PC-9 (cell line): ENCODE measurements at regions of chr1 and their contacts with region 1.

Region 1: GRCh38 chr1:54944610-54945544 is 35.6 kb upstream of the TMEM61 start:
- DNase-seq: peak; percentile 72 to 79
- H3K4me3 ChIP-seq: peak overlapping the region; percentile 10; the same call in 1 of the 2 replicates
- H3K27ac ChIP-seq: 0 out of 2 replicates have a peak overlapping the region, but pooled peaks have one; percentile 21
- H3K4me1 ChIP-seq: peaks cover 14% of the 10 kb centered on the region
- H3K27me3 ChIP-seq: no peaks in the 10 kb centered on the region
- CTCF ChIP-seq: peak; percentile 90

Region 2: DNA sequence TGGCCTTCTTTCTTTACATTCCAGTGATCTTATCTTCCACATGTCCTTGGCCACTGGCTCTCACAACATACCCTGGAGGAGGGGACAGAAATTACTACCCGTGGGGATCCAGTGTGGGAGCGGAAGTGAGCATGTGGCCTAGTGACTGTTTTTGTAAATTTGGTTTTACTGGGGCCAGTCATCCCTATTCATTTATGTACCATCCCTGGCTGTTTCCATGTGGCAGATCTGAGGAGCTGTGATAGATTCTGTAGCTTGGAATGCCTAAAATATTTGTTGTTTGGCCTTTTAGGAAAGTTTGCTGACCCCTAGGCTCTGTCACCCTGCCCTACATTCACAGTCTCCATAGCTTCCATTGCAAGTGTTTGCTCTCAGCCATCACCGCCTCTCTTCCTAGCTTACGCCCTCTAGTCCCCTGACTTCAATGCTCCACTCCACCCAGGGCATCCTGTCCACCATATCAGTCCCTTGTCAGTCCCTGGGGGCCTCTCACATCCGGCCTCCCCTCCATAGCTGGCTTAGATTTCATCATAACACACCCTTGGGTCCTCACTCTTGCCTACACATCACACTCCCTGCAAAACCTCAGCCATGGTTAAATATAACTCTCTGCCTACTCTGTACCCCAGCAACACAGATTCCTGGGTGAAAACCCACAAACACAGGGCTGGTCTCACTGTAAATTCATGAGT is 83.7 kb before region 1 on chr1:
- CTCF ChIA-PET with region 1: no interaction called
- POLR2A ChIA-PET with region 1: no interaction called
- intact Hi-C with region 1: loop called (anchors 2 kb)
- DNase-seq: peak; percentile 79 to 89
- H3K4me3 ChIP-seq: no peak overlapping the region
- H3K27ac ChIP-seq: peak overlapping the region; percentile 88
- H3K4me1 ChIP-seq: peaks cover 90% of the 10 kb centered on the region
- H3K27me3 ChIP-seq: no peaks in the 10 kb centered on the region
- CTCF ChIP-seq: no peak

Region 3: GRCh38 chr1:54973205-54973921 is 28.5 kb after region 1 on chr1:
- CTCF ChIA-PET with region 1: interaction called, 17 read pairs
- POLR2A ChIA-PET with region 1: no interaction called
- intact Hi-C with region 1: loop called (anchors 2 kb)
- DNase-seq: no peak
- H3K4me3 ChIP-seq: no peak overlapping the region
- H3K27ac ChIP-seq: no peak overlapping the region
- H3K4me1 ChIP-seq: peaks cover 72% of the 10 kb centered on the region
- H3K27me3 ChIP-seq: no peaks in the 10 kb centered on the region
- CTCF ChIP-seq: peak; percentile 56; the same call in 1 of the 2 replicates

Region 4: GRCh38 chr1:54996359-54996868 is 51.5 kb after region 1 on chr1:
- CTCF ChIA-PET with region 1: interaction called, 13 read pairs
- POLR2A ChIA-PET with region 1: no interaction called
- intact Hi-C with region 1: loop called (anchors 1 kb)
- DNase-seq: peak; percentile 39 to 81
- H3K4me3 ChIP-seq: peak overlapping the region; percentile 41; the same call in 1 of the 2 replicates
- H3K27ac ChIP-seq: no peak overlapping the region
- H3K4me1 ChIP-seq: 0 out of 2 replicates have a peak, but pooled peaks cover 4% of the 10 kb centered on the region
- H3K27me3 ChIP-seq: no peaks in the 10 kb centered on the region
- CTCF ChIP-seq: peak; percentile 95